Endothelial cell of umbilical vein (primary cell): ENCODE measurements at regions of chr1 and their contacts with region 1.

Region 1: GRCh38 chr1:199859491-199859933 is 168.0 kb upstream of the NR5A2 start:
- DNase-seq: peak; percentile 97
- H3K4me3 ChIP-seq: no peak overlapping the region
- H3K27ac ChIP-seq: peak overlapping the region; percentile 31
- H3K4me1 ChIP-seq: peaks cover 42% of the 10 kb centered on the region
- H3K27me3 ChIP-seq: no peaks in the 10 kb centered on the region
- CTCF ChIP-seq: no peak
- POLR2A ChIP-seq: no peak

Region 2: GRCh38 chr1:199272643-199273086 is 586.8 kb before region 1 on chr1:
- CTCF ChIA-PET with region 1: no interaction called
- POLR2A ChIA-PET with region 1: no interaction called
- dilution Hi-C with region 1: no loop called
- intact Hi-C with region 1: loop called (anchors 10 kb)
- DNase-seq: peak; percentile 97
- H3K4me3 ChIP-seq: no peak overlapping the region
- H3K27ac ChIP-seq: peak overlapping the region; percentile 97
- H3K4me1 ChIP-seq: peaks cover 25% of the 10 kb centered on the region
- H3K27me3 ChIP-seq: no peaks in the 10 kb centered on the region
- CTCF ChIP-seq: no peak
- POLR2A ChIP-seq: peak; percentile 49

Region 3: GRCh38 chr1:199733125-199733524 is 126.4 kb before region 1 on chr1:
- CTCF ChIA-PET with region 1: no interaction called
- POLR2A ChIA-PET with region 1: no interaction called
- dilution Hi-C with region 1: no loop called
- intact Hi-C with region 1: loop called (anchors 1 kb)
- DNase-seq: peak; percentile 54
- H3K4me3 ChIP-seq: no peak overlapping the region
- H3K27ac ChIP-seq: peak overlapping the region; percentile 63
- H3K4me1 ChIP-seq: peaks cover 38% of the 10 kb centered on the region
- H3K27me3 ChIP-seq: no peaks in the 10 kb centered on the region
- CTCF ChIP-seq: no peak
- POLR2A ChIP-seq: no peak

Region 4: DNA sequence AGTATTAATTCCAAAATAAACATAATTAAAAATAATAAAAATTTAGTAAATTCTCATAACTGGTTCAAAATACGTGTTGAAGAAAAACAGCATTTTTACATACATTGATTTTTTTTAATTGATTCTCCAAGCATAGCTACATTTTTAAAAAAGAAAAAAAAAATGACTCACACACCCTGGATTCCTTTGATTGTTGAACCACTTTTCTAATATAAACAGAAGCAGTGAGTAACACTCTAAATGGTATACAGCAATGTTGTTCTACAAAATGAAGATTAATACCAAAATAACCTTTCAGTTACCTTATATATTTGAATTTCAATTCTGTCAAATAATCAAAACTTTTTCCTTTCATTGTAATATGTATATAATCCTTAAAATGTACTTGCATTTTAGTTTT is 78.6 kb before region 1 on chr1:
- CTCF ChIA-PET with region 1: no interaction called
- POLR2A ChIA-PET with region 1: no interaction called
- dilution Hi-C with region 1: no loop called
- intact Hi-C with region 1: loop called (anchors 1 kb)
- DNase-seq: peak; percentile 56
- H3K4me3 ChIP-seq: no peak overlapping the region
- H3K27ac ChIP-seq: peak overlapping the region; percentile 63
- H3K4me1 ChIP-seq: peaks cover 45% of the 10 kb centered on the region
- H3K27me3 ChIP-seq: no peaks in the 10 kb centered on the region
- CTCF ChIP-seq: no peak
- POLR2A ChIP-seq: no peak

Region 5: DNA sequence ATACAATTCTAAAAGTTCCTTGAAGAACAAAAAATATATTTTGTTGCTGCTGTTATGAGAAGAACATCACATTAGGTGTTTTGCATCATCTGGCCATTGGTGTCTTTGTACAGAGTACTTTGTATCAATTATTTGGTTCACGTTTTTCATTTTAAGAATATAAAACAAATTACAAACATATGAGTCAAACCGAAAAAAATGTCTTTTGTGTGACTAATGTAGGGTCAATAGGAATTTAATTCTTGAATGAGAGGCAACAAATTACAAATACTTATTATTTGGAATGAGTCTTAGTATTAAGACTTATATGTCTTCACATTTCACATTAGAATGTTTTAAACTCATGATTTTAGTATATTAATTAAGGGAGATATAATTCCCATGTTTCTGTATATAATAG is 222.8 kb after region 1 on chr1:
- CTCF ChIA-PET with region 1: no interaction called
- POLR2A ChIA-PET with region 1: no interaction called
- dilution Hi-C with region 1: no loop called
- intact Hi-C with region 1: no loop called
- DNase-seq: peak; percentile 36
- H3K4me3 ChIP-seq: no peak overlapping the region
- H3K27ac ChIP-seq: no peak overlapping the region
- H3K4me1 ChIP-seq: peaks cover 19% of the 10 kb centered on the region
- H3K27me3 ChIP-seq: no peaks in the 10 kb centered on the region
- CTCF ChIP-seq: no peak
- POLR2A ChIP-seq: no peak

Region 6: DNA sequence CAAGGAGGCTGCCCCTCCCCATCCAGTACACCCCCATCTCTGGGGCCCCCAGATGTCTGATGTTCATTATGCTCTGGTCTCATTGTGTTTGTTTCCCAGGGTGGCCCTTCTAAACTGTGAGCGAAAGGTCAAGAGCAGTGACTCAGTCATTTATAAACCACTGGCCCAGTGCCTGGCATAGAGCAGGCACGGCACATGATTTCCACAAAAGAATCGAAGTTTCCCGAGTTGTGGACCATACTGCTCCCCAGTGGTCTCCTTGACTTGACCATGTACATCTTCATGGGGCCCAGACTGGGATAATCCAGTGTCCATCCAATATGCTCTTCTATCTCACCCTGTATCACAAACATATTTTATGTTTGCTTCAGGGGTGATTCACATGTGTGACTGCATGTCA is 321.3 kb after region 1 on chr1:
- CTCF ChIA-PET with region 1: no interaction called
- POLR2A ChIA-PET with region 1: no interaction called
- dilution Hi-C with region 1: no loop called
- intact Hi-C with region 1: loop called (anchors 2 kb)
- DNase-seq: peak; percentile 78
- H3K4me3 ChIP-seq: no peak overlapping the region
- H3K27ac ChIP-seq: no peak overlapping the region
- H3K4me1 ChIP-seq: peaks cover 31% of the 10 kb centered on the region
- H3K27me3 ChIP-seq: no peaks in the 10 kb centered on the region
- CTCF ChIP-seq: no peak
- POLR2A ChIP-seq: no peak

Region 7: DNA sequence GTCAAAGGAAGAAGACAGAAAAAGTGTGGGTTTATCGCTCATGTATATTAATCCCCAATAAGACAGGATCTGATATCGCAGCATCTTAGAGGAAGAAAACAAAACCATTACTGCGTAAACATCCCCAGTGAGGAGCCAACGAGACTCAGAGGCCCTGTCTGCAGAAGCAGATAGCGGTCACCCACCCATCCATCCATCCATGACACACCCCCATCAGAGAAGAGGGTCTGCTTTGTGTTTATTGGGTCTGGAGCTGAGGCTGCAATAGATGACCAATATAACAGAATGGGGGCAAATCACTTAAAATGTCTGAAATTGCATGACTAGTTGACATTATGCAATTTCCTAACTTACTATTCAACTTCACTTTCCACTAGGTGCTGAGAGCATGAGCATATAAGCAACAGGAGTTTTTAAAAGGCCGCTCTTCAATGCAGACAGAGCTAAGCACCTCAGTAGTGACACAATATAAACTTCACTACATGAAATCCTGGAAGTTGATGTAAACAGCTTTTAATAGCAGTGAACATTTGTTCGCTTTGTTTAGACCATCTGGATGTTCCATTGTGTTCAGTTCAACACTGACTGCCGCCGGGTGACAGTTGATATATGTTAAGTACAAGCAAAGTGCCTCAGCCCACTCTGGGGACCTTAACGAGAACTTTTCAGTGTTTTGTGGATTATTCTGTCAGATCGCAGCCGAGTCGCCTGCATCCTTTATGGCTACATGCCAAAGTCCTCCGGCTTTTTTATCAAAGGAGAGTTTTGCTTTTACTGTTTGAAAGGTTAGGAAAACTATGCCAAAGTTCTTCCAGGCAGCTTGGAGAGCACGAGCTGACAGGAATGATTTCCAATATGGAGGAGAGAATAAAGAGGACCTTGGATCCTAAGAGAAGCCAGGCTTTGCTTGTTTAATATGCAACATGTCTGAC is 382.9 kb after region 1 on chr1:
- CTCF ChIA-PET with region 1: no interaction called
- POLR2A ChIA-PET with region 1: no interaction called
- dilution Hi-C with region 1: no loop called
- intact Hi-C with region 1: loop called (anchors 1 kb)
- DNase-seq: peak; percentile 78
- H3K4me3 ChIP-seq: peak overlapping the region in 1 of 3 experiments; percentile 26
- H3K27ac ChIP-seq: peak overlapping the region; percentile 40
- H3K4me1 ChIP-seq: peaks cover 22% of the 10 kb centered on the region
- H3K27me3 ChIP-seq: peaks cover 0 to 4% of the 10 kb centered on the region in 2 experiments
- CTCF ChIP-seq: no peak
- POLR2A ChIP-seq: no peak

Region 8: DNA sequence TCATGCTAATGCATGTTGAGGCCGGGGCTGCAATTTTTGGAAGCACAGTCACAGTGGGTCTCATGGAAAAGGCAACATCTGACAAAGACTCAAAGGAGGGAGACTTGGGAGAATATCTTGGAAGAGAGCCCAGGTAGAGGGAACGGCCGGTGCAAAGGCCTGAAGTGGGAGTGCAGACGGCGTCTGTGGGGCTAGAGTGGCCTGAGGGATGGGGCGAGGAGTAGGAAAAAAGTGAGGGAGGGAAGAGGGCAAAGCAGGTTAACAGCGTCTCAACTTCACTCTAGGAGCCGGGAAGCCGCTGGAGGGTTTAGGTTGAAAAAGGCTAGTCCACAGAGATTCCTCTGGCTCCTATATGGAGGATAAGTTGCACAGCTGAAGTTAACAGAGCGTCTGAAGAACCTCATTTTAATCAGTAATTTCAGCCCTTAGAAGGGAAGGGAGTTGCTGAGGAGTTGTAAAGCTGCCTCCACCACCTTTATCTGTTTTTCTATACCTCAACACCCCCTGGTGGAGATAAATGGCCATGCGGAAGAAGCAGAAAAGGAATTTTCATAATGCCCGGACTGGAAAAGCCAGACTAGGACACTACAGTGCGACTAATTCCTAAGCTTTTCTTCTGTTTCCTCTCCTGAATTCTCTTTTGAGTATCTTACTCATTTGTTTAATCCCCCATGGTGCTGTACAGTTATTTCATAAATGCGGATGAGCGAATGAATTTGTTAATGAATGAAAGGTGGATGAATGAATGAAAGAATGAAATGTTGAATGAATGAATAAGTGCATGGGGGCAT is 629.1 kb after region 1 on chr1:
- CTCF ChIA-PET with region 1: no interaction called
- POLR2A ChIA-PET with region 1: no interaction called
- dilution Hi-C with region 1: no loop called
- intact Hi-C with region 1: loop called (anchors 10 kb)
- DNase-seq: peak; percentile 72
- H3K4me3 ChIP-seq: no peak overlapping the region
- H3K27ac ChIP-seq: no peak overlapping the region
- H3K4me1 ChIP-seq: peaks cover 10% of the 10 kb centered on the region
- H3K27me3 ChIP-seq: peaks cover 0 to 2% of the 10 kb centered on the region in 2 experiments
- CTCF ChIP-seq: peak; percentile 71 to 73
- POLR2A ChIP-seq: no peak